ENCODE measurements at regions of chr6 and their contacts with region 1.

Region 1: GRCh38 chr6:20092071-20092566 is 120.2 kb downstream of the MBOAT1 start:
- DNase-seq: peak; percentile 36
- H3K4me3 ChIP-seq: no peak overlapping the region; a peak in 1 of 4 replicates
- H3K27ac ChIP-seq: no peak overlapping the region
- H3K4me1 ChIP-seq: no peaks in the 10 kb centered on the region
- H3K27me3 ChIP-seq: no peaks in the 10 kb centered on the region
- CTCF ChIP-seq: peak; percentile 77
- EP300 ChIP-seq: no peak
- RAD21 ChIP-seq: peak; percentile 81

Region 2: DNA sequence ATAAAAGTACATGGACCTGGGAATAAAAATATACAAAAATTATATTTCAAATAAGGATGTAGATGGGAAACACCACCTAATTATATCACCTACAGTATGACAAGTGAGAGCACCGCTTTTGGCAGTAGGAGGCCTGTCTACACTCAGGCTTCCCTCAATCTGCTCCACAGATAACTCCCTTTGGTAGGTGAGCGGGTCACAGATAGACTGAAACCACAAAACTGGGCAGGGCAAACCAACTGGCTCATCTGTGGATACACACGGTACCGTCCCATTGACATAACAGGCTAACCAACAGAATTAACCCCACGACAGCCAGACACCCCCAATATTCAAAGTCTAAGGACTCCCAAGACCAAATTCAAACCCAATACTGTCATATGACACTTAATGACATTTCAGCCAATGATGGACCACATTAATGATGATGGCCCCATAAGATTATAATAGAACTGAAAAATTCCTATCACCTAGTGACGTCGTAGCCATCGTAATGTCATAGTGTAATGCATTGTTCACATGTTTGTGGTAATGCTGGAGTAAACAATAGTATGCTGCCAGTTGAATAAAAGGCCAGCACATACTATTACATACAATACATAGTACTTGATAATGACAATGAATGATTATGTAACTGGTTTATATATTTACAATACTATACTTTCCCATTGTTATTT is 10.4 kb after region 1 on chr6:
- CTCF ChIA-PET with region 1: interaction called, 12 read pairs
- POLR2A ChIA-PET with region 1: no interaction called
- DNase-seq: no peak
- H3K4me3 ChIP-seq: no peak overlapping the region
- H3K27ac ChIP-seq: no peak overlapping the region
- H3K4me1 ChIP-seq: no peaks in the 10 kb centered on the region
- H3K27me3 ChIP-seq: no peaks in the 10 kb centered on the region
- CTCF ChIP-seq: no peak
- EP300 ChIP-seq: no peak
- RAD21 ChIP-seq: no peak

Measured in SK-N-SH (cell line).